Activated naive CD4-positive, alpha-beta T cell treated with anti-CD3 and anti-CD28 coated beads, Interleukin-2, amount 10 ng/mL, durations not matched to agents 7 days and 5 days (primary cell): ENCODE measurements at regions of chr4 and their contacts with region 1.

Region 1: DNA sequence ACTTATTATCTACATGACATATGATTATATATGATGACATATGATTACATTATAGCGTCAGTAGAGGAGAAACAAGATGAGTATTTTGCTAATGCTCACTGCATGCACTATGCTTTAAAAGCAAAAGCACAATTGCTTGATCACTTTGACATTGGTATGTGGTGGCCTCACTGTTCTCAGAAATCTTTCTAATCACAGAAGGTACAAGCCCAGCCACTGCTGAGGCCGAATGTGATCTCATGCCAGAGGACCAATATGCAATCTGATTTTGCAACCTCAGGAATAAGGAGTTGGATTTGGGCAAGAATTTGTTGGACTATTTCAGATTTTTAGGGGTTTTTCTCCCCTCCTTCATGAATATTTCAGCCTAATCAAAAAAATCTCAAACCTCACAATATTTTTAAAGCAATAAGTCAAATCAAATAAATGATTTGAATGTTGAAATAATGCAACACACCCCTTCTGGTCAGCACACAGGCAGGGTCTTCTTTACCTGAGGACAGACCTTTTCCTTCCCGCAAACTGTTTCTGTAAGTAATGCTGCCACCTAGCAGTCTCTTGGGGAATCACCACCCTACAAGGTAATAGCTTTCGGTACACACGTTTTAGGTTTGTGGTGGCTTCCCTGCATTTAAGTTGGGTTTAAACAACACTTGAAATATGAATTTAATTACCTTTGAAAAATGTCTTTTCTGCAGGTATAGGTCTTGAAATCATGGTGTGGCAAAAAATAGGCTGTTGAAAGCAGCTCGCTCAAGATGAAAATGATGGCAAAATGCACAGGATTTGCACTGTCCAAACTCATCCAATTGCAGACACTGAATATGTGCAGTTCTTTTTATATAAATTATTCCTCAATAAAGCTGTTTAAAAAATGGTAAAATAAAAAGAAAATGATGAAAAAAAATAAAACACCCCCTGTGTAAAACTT is 4.8 kb upstream of the CXCL13 start:
- DNase-seq: peak; percentile 53
- H3K4me3 Mint-ChIP-seq: no peak overlapping the region
- H3K27ac Mint-ChIP-seq: no peak overlapping the region
- H3K4me1 Mint-ChIP-seq: peaks cover 4% of the 10 kb centered on the region
- H3K27me3 Mint-ChIP-seq: peaks cover 22% of the 10 kb centered on the region

Region 2: DNA sequence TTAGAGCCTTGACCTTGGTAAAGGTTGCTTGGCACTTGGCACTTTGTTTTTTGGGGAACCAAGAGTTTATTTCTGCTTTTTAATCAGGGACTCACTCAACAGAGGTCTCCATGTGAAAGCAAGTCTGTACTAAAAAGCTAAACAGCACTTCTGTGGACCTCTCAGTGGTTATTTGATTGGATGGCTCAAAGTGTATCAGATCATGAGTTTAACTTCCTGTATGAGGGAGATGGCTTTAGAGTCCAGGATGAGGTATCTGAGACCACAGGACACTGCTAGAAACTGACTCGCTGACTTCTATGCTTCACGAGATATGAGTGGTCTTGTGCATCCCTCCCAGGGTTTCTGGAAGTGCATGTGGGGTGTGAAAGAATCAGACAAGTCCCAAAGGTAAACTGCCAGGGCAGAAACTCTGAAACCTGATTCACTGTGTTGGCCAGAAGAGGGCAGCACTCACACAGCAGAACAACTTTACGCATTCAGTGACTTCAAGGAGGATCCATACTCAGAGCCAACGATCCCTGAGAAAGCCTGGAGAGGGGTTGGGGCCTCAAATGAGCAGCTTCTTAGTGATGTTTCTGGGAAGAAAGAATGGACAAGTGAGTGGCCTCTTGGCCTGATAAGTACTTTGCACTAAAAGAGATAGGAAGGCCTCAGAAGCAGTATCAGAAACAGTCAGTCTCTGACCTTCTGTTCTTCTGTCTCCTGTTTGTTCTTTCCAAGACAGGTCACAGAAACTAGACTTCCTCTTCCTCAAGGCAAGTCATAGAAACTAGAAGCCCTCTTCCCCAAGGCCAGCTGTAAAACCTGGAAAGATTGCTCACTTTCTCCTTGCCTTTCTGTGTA is 215.4 kb before region 1 on chr4:
- CTCF ChIA-PET with region 1: interaction called, 44 read pairs
- DNase-seq: peak; percentile 65
- H3K4me3 Mint-ChIP-seq: no peak overlapping the region
- H3K27ac Mint-ChIP-seq: no peak overlapping the region
- H3K4me1 Mint-ChIP-seq: peaks cover 5% of the 10 kb centered on the region
- H3K27me3 Mint-ChIP-seq: peaks cover 16% of the 10 kb centered on the region

Region 3: GRCh38 chr4:77465271-77465670 is 135.5 kb before region 1 on chr4:
- CTCF ChIA-PET with region 1: interaction called, 222 read pairs
- DNase-seq: no peak
- H3K4me3 Mint-ChIP-seq: no peak overlapping the region
- H3K27ac Mint-ChIP-seq: no peak overlapping the region
- H3K4me1 Mint-ChIP-seq: no peaks in the 10 kb centered on the region
- H3K27me3 Mint-ChIP-seq: no peaks in the 10 kb centered on the region

Region 4: GRCh38 chr4:77586951-77587383 is 13.8 kb before region 1 on chr4:
- CTCF ChIA-PET with region 1: interaction called, 43 read pairs
- DNase-seq: peak; percentile 55
- H3K4me3 Mint-ChIP-seq: no peak overlapping the region
- H3K27ac Mint-ChIP-seq: peak overlapping the region; percentile 34
- H3K4me1 Mint-ChIP-seq: peaks cover 21% of the 10 kb centered on the region
- H3K27me3 Mint-ChIP-seq: peaks cover 4% of the 10 kb centered on the region

Region 5: GRCh38 chr4:77618383-77619122 is 17.8 kb after region 1 on chr4:
- CTCF ChIA-PET with region 1: interaction called, 117 read pairs
- DNase-seq: peak; percentile 67
- H3K4me3 Mint-ChIP-seq: no peak overlapping the region
- H3K27ac Mint-ChIP-seq: no peak overlapping the region
- H3K4me1 Mint-ChIP-seq: peaks cover 2% of the 10 kb centered on the region
- H3K27me3 Mint-ChIP-seq: peaks cover 6% of the 10 kb centered on the region